ENCODE measurements at regions of chr4 and their contacts with region 1.

Region 1: DNA sequence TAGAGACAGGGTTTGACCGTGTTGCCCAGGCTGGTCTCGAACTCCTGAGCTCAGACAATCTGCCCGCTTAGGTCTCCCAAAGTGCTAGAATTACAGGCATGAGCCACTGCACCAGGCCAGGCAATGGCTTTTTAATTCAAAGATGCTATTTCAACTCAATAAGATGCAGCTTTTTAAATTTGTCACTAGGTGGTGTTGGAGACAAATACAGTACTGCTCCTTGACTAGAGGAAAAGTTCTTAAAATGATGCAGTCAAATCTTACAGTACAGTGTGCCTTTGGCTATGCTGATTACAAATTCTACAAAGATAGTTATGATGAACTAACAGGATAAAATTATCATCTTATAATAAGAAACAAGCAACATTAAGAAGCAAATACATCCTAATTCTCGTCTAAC is 441.1 kb downstream of the KCNIP4 start:
- DNase-seq: no peak
- H3K4me3 Mint-ChIP-seq: no peak overlapping the region
- H3K27ac Mint-ChIP-seq: no peak overlapping the region
- H3K4me1 Mint-ChIP-seq: no peaks in the 10 kb centered on the region
- H3K27me3 Mint-ChIP-seq: no peaks in the 10 kb centered on the region

Region 2: DNA sequence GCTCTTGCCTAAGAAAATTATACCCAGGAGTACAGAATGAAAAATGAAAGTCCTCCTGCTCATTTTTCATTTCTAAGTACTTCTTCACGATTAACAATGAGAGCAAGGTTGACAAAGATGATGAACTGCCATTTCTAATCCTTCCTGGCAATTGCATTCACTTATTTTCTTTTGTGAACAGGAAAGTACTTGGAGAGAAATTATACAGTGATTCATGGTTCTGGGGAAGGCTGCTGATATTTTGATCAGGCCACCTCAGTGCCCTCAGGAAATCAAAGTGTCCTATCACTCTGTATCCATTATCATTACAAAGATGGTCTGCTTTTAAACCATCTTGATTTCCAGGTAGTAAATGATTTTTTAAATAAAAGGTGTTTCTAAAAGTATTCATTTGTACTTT is 339.7 kb before region 1 on chr4:
- intact Hi-C with region 1: no loop called
- DNase-seq: no peak
- H3K4me3 Mint-ChIP-seq: no peak overlapping the region
- H3K27ac Mint-ChIP-seq: no peak overlapping the region
- H3K4me1 Mint-ChIP-seq: no peaks in the 10 kb centered on the region
- H3K27me3 Mint-ChIP-seq: no peaks in the 10 kb centered on the region

Region 3: GRCh38 chr4:21569638-21570037 is 62.2 kb after region 1 on chr4:
- intact Hi-C with region 1: no loop called
- DNase-seq: no peak
- H3K4me3 Mint-ChIP-seq: no peak overlapping the region
- H3K27ac Mint-ChIP-seq: no peak overlapping the region
- H3K4me1 Mint-ChIP-seq: no peaks in the 10 kb centered on the region
- H3K27me3 Mint-ChIP-seq: no peaks in the 10 kb centered on the region

Region 4: DNA sequence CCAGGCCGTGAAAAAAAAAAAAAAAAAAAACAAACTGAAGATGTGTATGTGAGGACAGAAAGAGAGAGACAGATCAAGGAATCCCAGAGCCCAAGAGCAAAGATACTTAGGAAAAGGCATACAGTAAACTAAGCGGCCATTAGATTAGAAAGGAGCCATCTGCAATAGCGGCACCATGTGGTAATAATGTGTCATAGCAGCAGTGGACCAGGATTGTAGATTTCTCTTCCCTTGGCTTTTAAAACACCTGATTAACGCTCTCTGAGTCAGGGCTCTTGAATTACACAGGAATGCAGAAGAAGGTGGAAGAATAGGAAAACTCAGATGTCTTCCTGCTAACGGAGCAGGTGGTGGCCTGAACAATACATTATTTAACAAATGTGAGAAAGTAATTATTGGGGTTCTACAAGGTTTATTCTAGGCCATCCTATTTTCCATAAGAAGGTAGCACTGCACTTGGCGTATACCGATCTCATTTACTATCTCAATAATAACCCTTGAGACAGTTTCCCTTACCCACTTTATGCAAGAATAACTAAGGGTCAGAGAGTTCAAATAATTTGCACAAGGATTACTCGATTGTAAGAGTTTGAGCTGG is 258.5 kb after region 1 on chr4:
- intact Hi-C with region 1: loop called (anchors 5 kb)
- DNase-seq: peak; percentile 73
- H3K4me3 Mint-ChIP-seq: no peak overlapping the region
- H3K27ac Mint-ChIP-seq: no peak overlapping the region
- H3K4me1 Mint-ChIP-seq: peaks cover 3% of the 10 kb centered on the region
- H3K27me3 Mint-ChIP-seq: peaks cover 3% of the 10 kb centered on the region

Region 5: GRCh38 chr4:22312113-22312512 is 804.7 kb after region 1 on chr4:
- intact Hi-C with region 1: no loop called
- DNase-seq: no peak
- H3K4me3 Mint-ChIP-seq: no peak overlapping the region
- H3K27ac Mint-ChIP-seq: no peak overlapping the region
- H3K4me1 Mint-ChIP-seq: no peaks in the 10 kb centered on the region
- H3K27me3 Mint-ChIP-seq: no peaks in the 10 kb centered on the region

Measured in activated CD4-positive, alpha-beta T cell treated with anti-CD3 and anti-CD28 coated beads, Interleukin-2, amount 10 ng/mL, durations not matched to agents 24 days and 14 days (primary cell).